AG04450 (cell line): ENCODE measurements at regions of chr12 and their contacts with region 1.

Region 1: DNA sequence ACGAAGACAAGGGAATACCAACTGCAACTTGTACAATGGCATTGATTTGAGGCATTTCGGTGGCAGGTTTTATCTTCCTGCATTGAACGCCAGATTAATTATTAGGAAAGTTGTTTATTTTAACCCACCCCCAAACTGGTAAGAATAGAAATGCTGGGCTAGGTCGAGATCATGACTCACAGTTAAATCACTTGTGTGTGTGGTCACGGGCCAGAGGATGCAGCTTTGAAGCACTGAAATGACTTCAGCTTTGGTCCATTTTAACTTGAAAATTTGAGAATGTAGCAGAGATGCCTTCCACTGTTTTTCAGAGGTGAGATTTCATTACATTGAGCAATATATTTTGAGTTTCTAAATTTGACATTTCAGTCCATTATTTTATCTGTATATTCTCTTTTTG is 23.6 kb upstream of the KCNH3 start:
- DNase-seq: peak; percentile 65
- H3K4me3 ChIP-seq: no peak overlapping the region
- H3K27ac ChIP-seq: no peak overlapping the region
- H3K27me3 ChIP-seq: no peaks in the 10 kb centered on the region
- CTCF ChIP-seq: no peak

Region 2: DNA sequence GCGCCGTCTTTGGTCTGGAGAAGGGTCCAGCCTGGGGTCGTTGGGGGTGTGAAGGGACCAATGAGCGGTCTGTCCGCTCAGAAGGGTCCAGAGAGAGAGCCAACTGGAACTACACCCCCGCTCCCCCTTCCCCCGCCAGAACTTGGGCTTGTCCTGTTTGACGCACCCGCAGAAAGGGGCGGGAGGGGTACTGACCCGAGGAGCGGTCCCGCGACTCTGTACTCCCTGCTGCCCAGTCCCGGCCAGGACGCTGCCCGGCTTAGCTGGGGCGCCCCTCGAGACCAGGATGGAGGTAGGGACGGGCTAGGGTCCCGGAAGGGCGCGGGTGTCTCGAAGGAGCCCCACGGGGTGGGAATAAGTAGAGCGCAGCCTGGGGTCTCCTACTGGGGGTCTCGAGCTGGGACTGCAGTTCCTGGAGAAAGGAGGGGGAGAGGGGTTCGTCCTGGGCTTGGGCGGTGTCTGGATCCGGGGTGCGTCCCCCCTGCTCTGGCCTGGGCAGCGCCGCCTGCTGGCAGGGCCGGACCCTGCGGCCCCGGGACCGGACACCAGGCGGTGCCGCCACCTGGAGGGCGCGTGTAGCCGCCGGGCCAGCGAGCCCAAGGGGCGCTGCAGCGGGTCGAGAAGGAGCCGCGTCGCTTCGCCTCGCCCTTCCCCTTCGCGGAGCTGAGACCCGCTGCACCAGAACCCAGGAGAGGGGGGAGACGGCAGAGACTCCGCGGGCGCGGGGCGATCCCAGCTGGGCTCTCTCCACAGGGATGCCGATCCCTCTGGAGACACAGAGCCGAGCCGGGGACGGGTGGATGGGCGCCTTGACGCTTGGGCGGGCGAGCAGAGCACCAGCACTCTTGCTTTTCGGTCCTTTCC is 700.8 kb before region 1 on chr12:
- CTCF ChIA-PET with region 1: no interaction called
- POLR2A ChIA-PET with region 1: no interaction called
- DNase-seq: no peak
- H3K4me3 ChIP-seq: peak overlapping the region; percentile 90
- H3K27ac ChIP-seq: peak overlapping the region; percentile 99
- H3K27me3 ChIP-seq: no peaks in the 10 kb centered on the region
- CTCF ChIP-seq: peak; percentile 93

Region 3: DNA sequence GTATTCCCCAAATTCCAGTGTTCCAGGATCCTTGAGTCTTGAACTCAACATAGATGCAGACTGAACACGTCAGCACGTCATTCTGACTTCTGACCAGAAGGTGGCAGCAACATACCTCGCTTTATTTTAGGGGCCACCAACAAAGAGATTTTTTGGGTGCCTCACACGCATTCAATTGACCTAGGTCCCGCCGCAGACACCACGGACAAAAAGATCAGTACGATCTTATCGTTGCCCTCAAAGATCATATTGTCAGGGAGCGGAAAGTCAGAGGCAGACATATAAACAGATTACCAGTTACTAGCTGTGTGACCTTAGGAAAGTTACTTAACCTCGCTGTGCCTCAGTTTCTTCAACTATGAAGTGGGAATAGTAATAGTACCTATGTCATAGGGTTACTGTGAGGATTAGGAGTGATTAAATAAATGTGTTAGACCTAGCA is 226.8 kb before region 1 on chr12:
- CTCF ChIA-PET with region 1: interaction called, 17 read pairs
- POLR2A ChIA-PET with region 1: no interaction called
- DNase-seq: no peak
- H3K4me3 ChIP-seq: no peak overlapping the region
- H3K27ac ChIP-seq: no peak overlapping the region
- H3K27me3 ChIP-seq: peaks cover 16% of the 10 kb centered on the region
- CTCF ChIP-seq: peak; percentile 79

Region 4: GRCh38 chr12:49342066-49342913 is 173.0 kb before region 1 on chr12:
- CTCF ChIA-PET with region 1: interaction called, 47 read pairs
- POLR2A ChIA-PET with region 1: interaction called, 3 read pairs
- DNase-seq: peak; percentile 30
- H3K4me3 ChIP-seq: peak overlapping the region; percentile 49
- H3K27ac ChIP-seq: no peak overlapping the region
- H3K27me3 ChIP-seq: peaks cover 85% of the 10 kb centered on the region
- CTCF ChIP-seq: peak; percentile 70

Region 5: DNA sequence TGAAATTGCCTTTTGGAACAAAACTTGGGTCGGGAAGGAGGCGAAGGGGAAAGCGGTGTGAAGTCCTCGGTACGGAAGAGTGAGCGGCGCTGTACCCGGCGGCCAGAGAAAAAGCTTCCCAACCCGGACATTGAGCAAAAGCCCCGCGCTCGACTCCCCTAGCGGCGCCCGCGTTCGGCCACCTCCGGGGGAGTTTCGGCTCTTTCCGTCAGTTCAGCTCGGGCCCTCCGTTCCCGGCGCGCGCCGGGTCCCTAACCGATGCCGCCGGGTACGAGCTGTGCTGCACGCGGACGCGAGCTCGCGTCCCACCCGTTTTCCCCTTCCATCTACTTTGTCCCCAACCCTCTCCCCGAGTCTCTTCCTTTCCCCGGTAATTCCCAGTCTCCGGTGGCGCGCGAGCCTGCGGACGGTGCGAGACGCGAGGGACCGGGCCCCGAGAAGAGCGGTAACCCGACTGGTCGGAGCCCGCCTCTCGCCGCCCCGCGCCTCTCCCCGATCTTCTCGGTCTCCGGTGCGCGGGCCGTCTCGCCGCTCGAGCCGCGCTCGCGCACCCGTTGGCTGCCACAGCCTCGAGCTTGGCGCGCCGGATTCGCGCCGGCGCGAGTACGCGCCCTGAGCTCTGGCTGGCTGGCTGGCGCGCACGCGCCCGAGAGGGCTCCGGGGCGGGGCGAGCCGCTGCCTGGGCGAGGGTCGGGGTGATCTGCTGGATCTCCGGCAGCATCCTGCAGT is 148.4 kb before region 1 on chr12:
- CTCF ChIA-PET with region 1: interaction called, 454 read pairs
- POLR2A ChIA-PET with region 1: interaction called, 3 read pairs
- DNase-seq: peak; percentile 83
- H3K4me3 ChIP-seq: peak overlapping the region; percentile 68
- H3K27ac ChIP-seq: peak overlapping the region; percentile 93
- H3K27me3 ChIP-seq: no peaks in the 10 kb centered on the region
- CTCF ChIP-seq: peak; percentile 25

Region 6: GRCh38 chr12:49503674-49504180 is 11.5 kb before region 1 on chr12:
- CTCF ChIA-PET with region 1: interaction called, 22 read pairs
- POLR2A ChIA-PET with region 1: no interaction called
- DNase-seq: peak; percentile 15
- H3K4me3 ChIP-seq: no peak overlapping the region
- H3K27ac ChIP-seq: no peak overlapping the region
- H3K27me3 ChIP-seq: no peaks in the 10 kb centered on the region
- CTCF ChIP-seq: no peak